Sciatic nerve (tissue), 2 donors: ENCODE measurements at regions of chr15 and their contacts with region 1.

Region 1: GRCh38 chr15:90362936-90363212 is 10.8 kb downstream of the ZNF774 start:
- DNase-seq: no peak
- ATAC-seq: peak; percentile 67

Region 2: DNA sequence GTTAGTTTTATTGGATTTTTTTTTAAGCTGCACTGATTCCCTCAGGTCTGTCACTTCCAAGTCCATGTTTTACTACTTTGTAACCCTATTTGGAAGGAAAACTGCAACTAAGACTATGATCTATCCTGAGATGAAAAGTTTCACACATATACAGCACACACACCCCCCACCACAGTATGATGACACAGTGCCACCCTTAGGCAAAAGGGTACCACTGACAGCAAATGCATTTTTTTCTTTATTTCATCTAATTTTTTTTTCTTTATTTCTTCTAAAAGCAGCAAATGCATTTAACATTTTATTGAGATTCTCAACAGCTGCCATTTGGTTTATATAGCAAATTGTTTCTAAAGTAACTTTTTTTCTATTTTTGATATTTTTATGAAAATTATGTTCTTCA is 76.2 kb before region 1 on chr15:
- intact Hi-C with region 1: no loop called
- DNase-seq: no peak
- ATAC-seq: peak; percentile 51

Region 3: DNA sequence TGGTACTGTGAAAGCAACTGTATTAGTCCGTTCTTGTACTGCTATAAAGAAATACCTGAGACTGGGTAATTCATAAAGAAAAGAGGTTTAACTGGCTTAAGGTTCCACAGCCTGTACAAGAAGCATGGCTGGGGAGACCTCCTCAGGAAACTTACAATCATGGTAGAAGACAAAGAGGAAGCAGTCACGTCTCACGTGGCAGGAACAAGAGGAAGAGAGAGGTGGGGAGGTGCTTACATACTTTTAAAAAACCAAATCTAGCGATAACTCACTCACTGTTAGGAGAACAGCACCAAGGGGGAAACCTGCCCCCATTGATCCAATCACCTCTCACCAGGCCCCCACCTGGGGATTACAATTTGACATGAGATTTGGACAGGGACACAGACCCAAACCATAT is 74.1 kb after region 1 on chr15:
- intact Hi-C with region 1: loop called (anchors 2 kb)
- DNase-seq: no peak
- ATAC-seq: no peak

Region 4: GRCh38 chr15:90482124-90483011 is 119.5 kb after region 1 on chr15:
- intact Hi-C with region 1: loop called (anchors 10 kb)
- DNase-seq: no peak
- ATAC-seq: peak; percentile 83